Colonic mucosa (tissue), 4 donors: ENCODE measurements at regions of chr18 and their contacts with region 1.

Region 1: GRCh38 chr18:33761363-33761762 is 183.3 kb downstream of the ASXL3 start:
- DNase-seq: no peak
- H3K4me3 ChIP-seq: no peak overlapping the region
- H3K27ac ChIP-seq: no peak overlapping the region
- H3K4me1 ChIP-seq: no peaks in the 10 kb centered on the region
- H3K27me3 ChIP-seq: no peaks in the 10 kb centered on the region
- CTCF ChIP-seq: no peak

Region 2: GRCh38 chr18:33231474-33232317 is 529.7 kb before region 1 on chr18:
- intact Hi-C with region 1: loop called (anchors 10 kb)
- DNase-seq: peak; percentile 82
- H3K4me3 ChIP-seq: no peak overlapping the region
- H3K27ac ChIP-seq: no peak overlapping the region
- H3K4me1 ChIP-seq: no peaks in the 10 kb centered on the region
- H3K27me3 ChIP-seq: no peaks in the 10 kb centered on the region
- CTCF ChIP-seq: peak; percentile 78